ENCODE measurements at regions of chr1 and their contacts with region 1.

Region 1: DNA sequence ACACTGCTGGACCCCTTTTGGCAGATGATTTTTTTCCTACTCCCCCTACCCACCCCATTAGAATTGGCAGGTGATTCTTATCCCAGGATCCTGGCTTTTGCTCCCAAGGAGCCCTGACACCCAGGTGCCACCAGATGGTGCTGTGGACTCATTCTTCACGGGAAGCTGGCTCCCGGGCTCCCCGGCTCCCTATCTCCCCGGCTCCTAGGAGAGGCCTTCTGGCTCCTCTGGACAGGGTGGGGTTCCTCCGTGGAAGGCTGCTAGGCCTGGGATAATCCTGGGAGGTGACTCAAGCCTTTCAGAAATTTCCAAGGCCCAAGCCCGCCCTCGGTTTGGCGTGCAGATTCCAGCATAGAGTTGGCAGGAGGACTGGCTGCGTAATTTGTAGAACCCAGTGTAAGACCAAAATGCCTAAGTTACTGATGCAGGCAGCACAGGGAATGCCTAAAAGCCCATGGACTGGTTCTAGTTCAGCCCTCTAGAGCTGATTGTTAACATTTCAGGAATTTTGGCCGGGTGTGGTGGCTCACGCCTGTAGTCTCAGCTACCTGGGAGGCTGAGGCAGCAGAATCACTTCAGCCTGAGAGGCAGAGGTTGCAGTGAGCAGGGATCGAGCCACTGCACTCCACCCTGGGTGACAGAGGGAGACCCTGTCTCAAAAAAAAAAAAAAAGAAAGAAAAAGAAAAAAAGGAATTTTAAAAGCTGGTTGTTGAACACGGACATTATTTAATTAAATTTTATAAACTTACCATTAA is 6.8 kb upstream of the BSDC1 start:
- DNase-seq: peak; percentile 63
- ATAC-seq: peak; percentile 86
- H3K4me3 Mint-ChIP-seq: no peak overlapping the region
- H3K27ac Mint-ChIP-seq: no peak overlapping the region
- H3K4me1 Mint-ChIP-seq: no peaks in the 10 kb centered on the region
- H3K27me3 Mint-ChIP-seq: no peaks in the 10 kb centered on the region
- CTCF ChIP-seq: peak; percentile 90

Region 2: GRCh38 chr1:32303997-32304622 is 96.9 kb before region 1 on chr1:
- CTCF ChIA-PET with region 1: no interaction called
- POLR2A ChIA-PET with region 1: no interaction called
- intact Hi-C with region 1: no loop called
- DNase-seq: no peak
- ATAC-seq: no peak
- H3K4me3 Mint-ChIP-seq: no peak overlapping the region
- H3K27ac Mint-ChIP-seq: peak overlapping the region; percentile 66
- H3K4me1 Mint-ChIP-seq: peaks cover 55% of the 10 kb centered on the region
- H3K27me3 Mint-ChIP-seq: no peaks in the 10 kb centered on the region
- CTCF ChIP-seq: no peak

Region 3: DNA sequence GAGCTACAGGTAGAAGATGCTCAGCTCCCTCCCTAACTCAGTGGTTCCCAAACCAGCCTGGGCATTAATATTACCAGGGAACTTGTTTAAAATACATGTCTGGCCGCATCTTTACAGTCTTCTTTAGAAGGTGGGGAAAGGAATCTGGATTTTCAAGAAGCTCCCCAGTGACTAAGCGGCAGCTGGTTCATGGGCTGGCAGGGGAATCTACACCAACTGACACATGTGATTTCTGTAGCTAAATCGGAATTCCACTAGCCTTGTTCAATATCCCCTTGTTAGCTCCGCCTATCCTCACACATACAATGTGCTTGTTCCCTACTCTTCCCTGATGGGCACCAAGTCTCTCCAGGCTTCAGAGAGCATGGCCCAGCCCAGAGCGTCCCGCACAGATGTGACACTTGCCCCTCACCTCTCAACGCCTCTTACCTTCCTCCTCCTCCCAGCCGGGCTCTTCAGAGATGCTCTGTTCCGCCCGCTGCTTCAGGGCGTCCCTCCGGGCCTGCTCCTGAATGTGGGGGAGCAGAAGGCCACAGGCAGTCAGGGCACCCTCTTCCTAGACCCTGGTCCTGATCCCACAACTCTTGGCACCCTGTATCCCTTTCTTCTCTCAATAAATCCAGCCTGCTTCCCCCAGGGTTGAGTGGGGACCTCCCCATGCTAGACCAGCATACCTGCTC is 23.4 kb before region 1 on chr1:
- CTCF ChIA-PET with region 1: interaction called, 10 read pairs
- POLR2A ChIA-PET with region 1: no interaction called
- intact Hi-C with region 1: no loop called
- DNase-seq: no peak
- ATAC-seq: no peak
- H3K4me3 Mint-ChIP-seq: no peak overlapping the region
- H3K27ac Mint-ChIP-seq: no peak overlapping the region
- H3K4me1 Mint-ChIP-seq: peaks cover 2% of the 10 kb centered on the region
- H3K27me3 Mint-ChIP-seq: no peaks in the 10 kb centered on the region
- CTCF ChIP-seq: no peak

Region 4: DNA sequence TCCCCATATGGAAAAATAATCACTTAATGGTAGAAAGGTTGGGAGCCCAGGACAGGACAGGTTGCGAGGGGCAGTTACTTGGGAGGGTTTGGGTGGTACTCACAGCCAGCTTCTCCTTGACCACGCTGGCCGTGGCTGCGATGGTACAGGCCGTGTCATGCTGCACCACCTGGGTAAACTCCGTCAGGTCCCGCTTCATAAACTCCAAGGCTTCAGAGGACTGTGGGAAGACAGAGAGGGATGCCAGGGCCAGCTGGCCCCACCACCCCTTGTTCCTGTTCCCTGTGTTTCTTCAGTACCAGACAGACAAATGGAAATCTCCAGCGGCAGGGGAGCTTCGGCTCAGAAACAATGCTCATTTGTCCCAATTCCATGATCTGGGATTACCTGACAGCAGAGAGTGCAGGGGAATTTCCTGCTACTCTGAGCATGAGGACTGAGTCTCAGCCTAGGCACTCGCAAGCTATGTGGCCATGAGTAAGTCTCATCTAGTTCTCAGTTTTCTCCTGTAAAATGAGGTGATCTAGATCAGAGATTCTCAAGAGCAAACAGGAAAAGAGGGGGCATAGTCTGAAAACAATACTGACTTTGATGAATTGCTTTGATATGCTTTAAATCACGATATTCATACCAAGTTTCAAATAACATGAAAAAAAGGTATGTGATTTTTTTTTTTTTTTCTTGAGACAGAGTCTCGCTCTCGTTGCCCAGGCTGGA is 14.2 kb before region 1 on chr1:
- CTCF ChIA-PET with region 1: interaction called, 33 read pairs
- POLR2A ChIA-PET with region 1: interaction called, 4 read pairs
- intact Hi-C with region 1: no loop called
- DNase-seq: no peak
- ATAC-seq: no peak
- H3K4me3 Mint-ChIP-seq: no peak overlapping the region
- H3K27ac Mint-ChIP-seq: no peak overlapping the region
- H3K4me1 Mint-ChIP-seq: peaks cover 4% of the 10 kb centered on the region
- H3K27me3 Mint-ChIP-seq: no peaks in the 10 kb centered on the region
- CTCF ChIP-seq: no peak

Region 5: DNA sequence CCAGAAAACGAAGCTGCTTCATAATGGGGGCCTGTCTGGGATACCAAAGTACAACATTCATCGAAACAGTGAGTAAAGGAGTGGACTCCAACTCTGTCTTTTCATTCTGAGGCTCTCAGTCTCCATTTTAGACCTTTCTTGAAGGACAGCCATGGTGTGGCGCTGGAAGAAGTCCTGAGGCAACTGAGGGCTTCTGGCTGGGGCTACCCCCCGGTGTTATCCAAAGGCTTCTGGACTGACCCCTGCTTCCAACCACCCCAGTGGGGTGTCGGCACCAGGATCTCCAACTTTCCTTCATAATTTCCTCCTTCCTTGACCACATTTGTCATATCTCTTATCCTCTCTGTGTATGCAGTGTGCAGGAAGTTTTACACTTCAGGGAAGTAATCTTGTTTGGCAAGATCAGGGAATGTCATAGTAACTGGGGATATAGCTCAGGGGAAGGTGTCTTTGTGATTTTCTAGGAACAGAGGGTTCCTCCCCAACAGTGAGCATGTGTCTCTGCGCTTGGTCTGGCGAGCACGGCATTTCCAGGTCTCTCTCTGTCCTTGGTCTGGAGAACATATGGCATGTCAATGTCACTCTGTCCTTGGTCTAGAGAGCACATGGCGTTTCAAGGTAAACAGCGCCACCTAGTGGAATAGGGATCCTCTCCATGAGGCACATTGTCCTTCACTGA is 12.6 kb after region 1 on chr1:
- CTCF ChIA-PET with region 1: interaction called, 82 read pairs
- POLR2A ChIA-PET with region 1: interaction called, 5 read pairs
- intact Hi-C with region 1: no loop called
- DNase-seq: peak; percentile 85
- ATAC-seq: peak; percentile 79
- H3K4me3 Mint-ChIP-seq: no peak overlapping the region
- H3K27ac Mint-ChIP-seq: no peak overlapping the region
- H3K4me1 Mint-ChIP-seq: peaks cover 3% of the 10 kb centered on the region
- H3K27me3 Mint-ChIP-seq: peaks cover 4% of the 10 kb centered on the region
- CTCF ChIP-seq: peak; percentile 87

Region 6: GRCh38 chr1:32426489-32427255 is 25.6 kb after region 1 on chr1:
- CTCF ChIA-PET with region 1: interaction called, 13 read pairs
- POLR2A ChIA-PET with region 1: interaction called, 4 read pairs
- intact Hi-C with region 1: no loop called
- DNase-seq: no peak
- ATAC-seq: no peak
- H3K4me3 Mint-ChIP-seq: no peak overlapping the region
- H3K27ac Mint-ChIP-seq: no peak overlapping the region
- H3K4me1 Mint-ChIP-seq: no peaks in the 10 kb centered on the region
- H3K27me3 Mint-ChIP-seq: peaks cover 31% of the 10 kb centered on the region
- CTCF ChIP-seq: no peak